Activated B cell treated with CpG ODN at 0.5 μM for 24 hours (primary cell): ENCODE measurements at regions of chr7 and their contacts with region 1.

Region 1: GRCh38 chr7:90892213-90892612 is 296.1 kb downstream of the CDK14 start:
- DNase-seq: no peak
- ATAC-seq: peak; percentile 64
- H3K4me3 Mint-ChIP-seq: peak overlapping the region; percentile 8
- H3K27ac Mint-ChIP-seq: peak overlapping the region; percentile 73
- H3K4me1 Mint-ChIP-seq: peaks cover 49% of the 10 kb centered on the region
- H3K27me3 Mint-ChIP-seq: no peaks in the 10 kb centered on the region
- CTCF ChIP-seq: no peak

Region 2: DNA sequence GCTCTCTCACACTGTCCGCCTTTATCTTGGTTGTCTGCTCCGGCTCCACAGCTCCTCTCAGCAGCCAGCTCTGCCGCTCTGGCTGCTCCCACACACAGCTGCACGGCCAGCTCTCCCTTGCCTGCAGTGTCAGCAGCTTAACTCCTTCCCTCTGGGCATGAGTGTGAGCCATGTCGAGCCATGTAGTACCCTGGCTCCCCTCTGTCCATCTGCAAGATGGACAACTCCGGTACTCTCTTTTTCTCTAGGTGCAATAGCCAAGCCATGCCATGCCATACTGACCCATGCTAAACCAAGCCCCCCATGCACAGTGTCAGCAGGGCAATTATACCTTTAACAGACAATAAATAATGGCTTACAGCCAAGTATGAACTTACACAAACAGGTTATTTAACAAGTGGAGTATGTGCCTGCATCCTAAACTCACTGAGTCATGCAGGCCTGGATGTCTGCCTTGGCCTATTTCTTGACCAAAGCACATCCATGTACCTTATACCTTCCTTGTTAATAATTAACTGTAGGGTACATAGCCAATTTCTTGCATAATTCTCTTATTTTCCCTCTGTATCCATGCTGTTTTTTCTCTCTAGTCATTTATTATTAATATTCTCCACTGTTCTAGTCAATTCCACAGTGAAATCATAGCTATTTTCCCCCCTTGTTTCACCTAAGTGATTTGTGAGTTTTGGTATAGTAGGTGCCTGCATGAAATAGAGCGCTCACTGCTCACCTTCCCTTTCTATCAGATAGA is 125.2 kb before region 1 on chr7:
- CTCF ChIA-PET with region 1: no interaction called
- POLR2A ChIA-PET with region 1: no interaction called
- intact Hi-C with region 1: loop called (anchors 5 kb)
- DNase-seq: no peak
- ATAC-seq: no peak
- H3K4me3 Mint-ChIP-seq: peak overlapping the region; percentile 1
- H3K27ac Mint-ChIP-seq: peak overlapping the region; percentile 65
- H3K4me1 Mint-ChIP-seq: peaks cover 66% of the 10 kb centered on the region
- H3K27me3 Mint-ChIP-seq: no peaks in the 10 kb centered on the region
- CTCF ChIP-seq: no peak

Region 3: DNA sequence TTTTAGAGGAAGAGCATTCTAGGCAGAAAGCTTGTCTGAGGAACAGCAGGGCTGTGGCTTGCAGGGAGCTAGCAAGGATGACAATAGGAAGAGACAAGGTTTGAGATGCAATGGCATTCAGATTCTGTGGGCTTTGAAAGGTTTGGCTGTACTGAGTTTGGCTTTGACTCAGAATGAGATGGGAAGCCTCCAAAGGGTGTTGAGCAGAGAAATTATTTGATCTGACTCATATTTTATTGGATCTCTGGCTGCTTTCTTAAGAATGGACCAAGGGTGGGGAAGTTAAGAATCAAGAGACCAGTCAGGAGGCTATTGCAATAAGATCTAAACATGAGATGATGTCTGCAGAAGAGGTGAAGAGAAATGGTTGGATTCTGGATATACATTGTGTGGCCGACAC is 22.9 kb before region 1 on chr7:
- CTCF ChIA-PET with region 1: no interaction called
- POLR2A ChIA-PET with region 1: no interaction called
- intact Hi-C with region 1: loop called (anchors 2 kb)
- DNase-seq: no peak
- ATAC-seq: no peak
- H3K4me3 Mint-ChIP-seq: no peak overlapping the region
- H3K27ac Mint-ChIP-seq: no peak overlapping the region
- H3K4me1 Mint-ChIP-seq: peaks cover 2% of the 10 kb centered on the region
- H3K27me3 Mint-ChIP-seq: no peaks in the 10 kb centered on the region
- CTCF ChIP-seq: no peak